Mammary epithelial cell (primary cell): ENCODE measurements at regions of chr21 and their contacts with region 1.

Region 1: DNA sequence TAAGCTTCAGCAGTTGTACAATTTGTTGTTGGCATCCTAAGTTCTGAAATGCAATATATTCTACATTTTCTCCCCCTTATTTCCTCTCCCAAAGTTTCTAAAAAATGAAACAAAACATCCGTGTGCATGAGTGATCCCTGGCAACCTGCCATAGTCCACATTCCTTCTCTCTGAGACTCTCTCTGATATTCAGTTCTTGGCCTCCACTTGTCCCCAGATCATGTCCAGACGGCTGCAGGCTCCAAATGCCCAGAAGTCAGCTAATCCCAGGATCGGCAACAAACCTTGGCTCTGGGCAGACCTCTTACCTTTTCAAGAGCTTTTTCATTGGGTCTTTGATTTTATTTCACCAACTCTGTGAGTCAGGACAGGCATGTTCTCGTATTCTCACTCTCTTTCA is 187.8 kb downstream of the ETS2 start:
- DNase-seq: peak; percentile 92
- H3K4me3 ChIP-seq: peak overlapping the region in 1 of 3 experiments; percentile 3
- H3K27ac ChIP-seq: peak overlapping the region; percentile 86
- H3K4me1 ChIP-seq: peaks cover 40% of the 10 kb centered on the region
- H3K27me3 ChIP-seq: no peaks in the 10 kb centered on the region
- CTCF ChIP-seq: no peak

Region 2: GRCh38 chr21:38958940-38959691 is 34.4 kb before region 1 on chr21:
- CTCF ChIA-PET with region 1: no interaction called
- dilution Hi-C with region 1: no loop called
- in situ Hi-C with region 1: no loop called
- intact Hi-C with region 1: loop called (anchors 5 kb)
- DNase-seq: peak; percentile 78
- H3K4me3 ChIP-seq: no peak overlapping the region
- H3K27ac ChIP-seq: no peak overlapping the region
- H3K4me1 ChIP-seq: peaks cover 37% of the 10 kb centered on the region
- H3K27me3 ChIP-seq: no peaks in the 10 kb centered on the region
- CTCF ChIP-seq: no peak

Region 3: DNA sequence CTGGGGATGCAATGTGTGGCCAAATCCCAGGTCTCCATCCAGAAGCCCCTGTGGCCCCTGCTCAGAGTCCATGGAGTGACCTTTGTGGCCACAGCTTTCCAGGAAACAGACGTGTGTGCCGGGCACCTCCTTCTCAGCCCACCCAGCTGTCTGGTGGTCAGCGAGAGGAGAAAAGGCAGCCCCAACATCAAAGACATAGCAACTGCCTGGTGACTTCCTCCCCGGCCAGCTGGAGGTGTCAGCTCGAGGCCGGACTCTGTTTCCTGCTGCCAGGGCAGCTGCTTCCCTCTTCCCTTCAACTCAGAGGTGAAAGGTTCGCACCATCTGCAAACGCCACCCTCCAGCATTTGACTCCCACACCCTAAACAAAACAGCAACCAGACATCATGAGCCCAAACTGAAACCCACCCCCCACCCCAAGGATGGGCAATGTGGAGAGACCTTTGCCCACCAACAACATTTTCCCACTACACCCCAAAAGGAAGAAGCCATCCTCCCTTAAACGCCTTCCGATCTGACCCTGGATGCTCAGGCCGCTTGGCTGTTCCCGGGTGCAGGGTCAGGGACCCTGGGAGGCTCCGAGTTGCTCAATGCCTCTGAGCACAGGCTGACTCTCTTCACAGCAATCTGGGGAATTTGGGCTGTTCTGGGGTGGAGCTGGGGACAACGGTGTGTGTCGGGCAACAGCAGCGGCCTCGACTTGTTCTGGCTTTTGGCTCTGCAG is 27.4 kb after region 1 on chr21:
- CTCF ChIA-PET with region 1: no interaction called
- dilution Hi-C with region 1: loop called (anchors 5 kb)
- in situ Hi-C with region 1: no loop called
- intact Hi-C with region 1: loop called (anchors 2 kb)
- DNase-seq: peak; percentile 77
- H3K4me3 ChIP-seq: no peak overlapping the region
- H3K27ac ChIP-seq: peak overlapping the region; percentile 54
- H3K4me1 ChIP-seq: peaks cover 34% of the 10 kb centered on the region
- H3K27me3 ChIP-seq: no peaks in the 10 kb centered on the region
- CTCF ChIP-seq: no peak